RWPE1 (cell line): ENCODE measurements at regions of chr7 and their contacts with region 1.

Region 1: DNA sequence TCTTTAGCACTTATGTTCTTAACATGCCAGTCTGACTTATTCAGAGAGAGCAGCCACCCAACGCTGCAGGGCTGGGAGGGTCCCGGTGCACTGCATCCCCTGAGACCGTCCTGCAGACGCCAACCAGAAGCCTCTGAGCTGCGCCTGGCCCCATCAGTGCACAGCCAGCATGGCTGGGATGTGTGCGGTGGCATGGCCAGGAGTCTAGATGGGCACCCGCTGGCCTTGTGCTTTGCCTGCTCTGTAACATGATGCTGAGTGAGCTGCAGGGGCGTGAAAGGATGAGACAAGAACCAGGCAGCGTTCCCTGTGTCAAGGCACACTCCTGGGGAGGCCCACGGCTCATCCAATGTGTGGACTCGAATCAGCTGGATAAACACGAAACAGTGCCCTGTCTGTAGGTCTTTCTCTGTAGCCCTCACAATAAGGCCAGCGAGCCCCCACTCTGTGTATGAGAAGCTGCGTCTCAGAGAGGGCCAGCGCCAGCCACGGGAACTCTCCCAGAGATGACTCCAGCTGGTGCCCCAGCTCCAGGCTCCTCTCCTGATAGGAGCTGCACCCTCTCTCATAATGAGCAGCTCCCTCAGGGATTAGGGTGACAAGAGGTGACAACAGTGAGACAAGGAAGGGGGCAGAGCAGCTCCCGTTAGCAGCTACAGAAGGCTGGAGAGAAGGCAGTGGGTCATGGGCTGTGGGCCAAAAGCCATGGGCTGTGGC is 96.8 kb downstream of the TNS3 start:
- DNase-seq: no peak
- H3K27ac ChIP-seq: peak overlapping the region; percentile 43
- CTCF ChIP-seq: no peak

Region 2: DNA sequence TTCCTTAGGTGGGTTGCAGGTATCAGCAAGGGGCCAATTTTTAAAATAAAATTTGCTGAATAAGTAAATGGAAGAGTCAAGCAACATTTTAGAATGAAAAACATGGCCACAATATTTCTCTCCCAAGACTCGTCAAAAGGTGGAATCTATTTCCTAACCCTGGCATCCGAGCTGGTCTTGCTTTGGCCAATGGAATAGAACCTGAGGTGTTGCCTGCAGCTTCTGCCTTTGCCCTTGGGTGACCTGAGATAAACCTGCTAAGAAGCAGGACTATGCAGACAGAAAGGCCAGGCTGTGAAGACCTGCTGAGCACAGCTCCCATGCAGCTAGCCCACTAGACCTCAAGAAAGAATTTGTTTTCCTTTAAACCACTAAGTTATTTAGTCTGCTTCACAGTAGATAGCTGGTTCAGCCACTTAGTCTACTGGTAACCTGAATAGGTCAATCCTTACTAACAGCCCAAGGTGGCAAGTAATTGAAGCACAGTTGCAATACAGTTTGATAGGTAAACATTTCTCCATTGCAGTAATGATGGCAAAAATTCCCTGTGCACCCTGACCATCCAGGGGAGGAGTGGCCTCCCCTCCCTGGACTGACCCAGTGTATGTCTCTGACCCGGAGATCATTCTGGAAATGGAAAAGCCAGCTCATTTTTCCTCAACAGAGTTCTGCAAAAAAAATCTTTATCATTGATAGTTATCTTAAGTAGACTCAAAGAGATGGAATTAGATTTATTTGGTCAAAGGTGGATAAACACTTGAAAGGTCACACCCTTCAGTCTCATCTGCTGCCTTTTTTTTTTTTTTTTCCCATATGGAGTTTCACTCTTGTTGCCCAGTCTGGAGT is 76.7 kb after region 1 on chr7:
- CTCF ChIA-PET with region 1: no interaction called
- POLR2A ChIA-PET with region 1: interaction called, 13 read pairs
- DNase-seq: no peak
- H3K27ac ChIP-seq: no peak overlapping the region
- CTCF ChIP-seq: no peak